Activated naive CD4-positive, alpha-beta T cell treated with anti-CD3 and anti-CD28 coated beads, Interleukin-2, amount 10 ng/mL, durations not matched to agents 7 days and 5 days (primary cell): ENCODE measurements at regions of chr11 and their contacts with region 1.

Region 1: DNA sequence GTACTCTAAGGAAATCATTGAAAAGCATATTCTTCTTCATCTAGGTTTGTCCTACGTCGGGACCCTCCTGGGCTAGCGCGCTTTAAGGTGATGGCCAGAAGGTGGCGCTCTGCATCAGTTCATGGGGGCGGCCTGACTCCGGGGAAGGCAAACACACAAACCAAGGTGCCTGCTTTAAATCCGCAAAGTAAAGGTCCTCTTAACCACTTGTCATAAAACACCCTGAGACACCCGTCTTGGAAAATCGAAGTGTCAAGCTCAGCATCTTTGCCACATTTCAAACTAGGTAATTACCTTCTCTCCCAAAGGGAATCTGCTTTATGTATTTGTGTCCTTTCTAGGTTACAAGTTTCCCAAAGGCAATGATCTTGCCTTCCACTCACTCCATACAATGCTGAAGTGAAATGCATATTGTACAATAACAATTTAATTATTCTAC is 33.9 kb downstream of the LMO2 start:
- DNase-seq: peak; percentile 79
- H3K4me3 Mint-ChIP-seq: no peak overlapping the region
- H3K27ac Mint-ChIP-seq: no peak overlapping the region
- H3K4me1 Mint-ChIP-seq: no peaks in the 10 kb centered on the region
- H3K27me3 Mint-ChIP-seq: peaks cover 62% of the 10 kb centered on the region

Region 2: DNA sequence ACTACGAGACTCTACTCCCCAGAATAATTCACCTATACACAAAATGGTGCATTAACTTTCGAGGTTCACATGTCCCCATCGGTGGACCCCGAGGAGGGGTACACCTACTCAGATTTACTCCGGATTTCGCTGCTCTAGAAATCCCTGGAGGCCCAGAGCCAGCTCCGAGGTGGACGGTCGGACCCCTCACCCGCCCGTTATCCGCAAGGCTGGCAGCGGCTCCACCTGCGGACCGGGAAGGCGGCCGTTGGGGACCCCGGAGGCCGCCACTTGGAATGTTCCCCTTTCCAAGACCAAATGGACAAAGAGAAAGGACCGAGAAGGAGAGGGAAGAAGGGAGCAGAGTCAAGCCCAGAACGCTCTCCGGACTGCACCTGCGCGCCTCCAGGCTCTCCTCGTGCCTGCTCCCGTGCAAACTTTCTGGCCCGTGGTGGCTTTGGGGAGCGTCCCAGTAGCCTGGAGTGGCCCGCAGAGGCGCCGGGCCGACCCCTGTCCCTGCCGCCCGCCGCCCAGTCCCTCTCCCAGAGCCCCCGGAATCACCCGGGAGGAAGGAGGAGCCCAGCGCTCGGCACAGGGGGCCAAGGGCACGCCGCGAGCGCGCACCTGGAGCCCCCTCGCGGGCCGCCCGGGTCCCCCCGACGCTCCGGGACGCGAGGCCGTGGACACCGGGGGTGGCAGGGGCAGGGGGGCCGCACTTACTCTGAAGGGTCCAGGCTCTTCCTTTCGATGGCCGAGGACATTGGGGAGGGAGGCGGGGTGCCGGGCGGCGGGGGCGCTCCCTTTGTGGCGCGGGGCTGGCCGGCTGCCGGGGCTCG is 10.9 kb after region 1 on chr11:
- CTCF ChIA-PET with region 1: interaction called, 14 read pairs
- DNase-seq: no peak
- H3K4me3 Mint-ChIP-seq: peak overlapping the region; percentile 1
- H3K27ac Mint-ChIP-seq: no peak overlapping the region
- H3K4me1 Mint-ChIP-seq: peaks cover 18% of the 10 kb centered on the region
- H3K27me3 Mint-ChIP-seq: peaks cover 89% of the 10 kb centered on the region

Region 3: GRCh38 chr11:33912405-33913361 is 54.7 kb after region 1 on chr11:
- CTCF ChIA-PET with region 1: no interaction called
- DNase-seq: no peak
- H3K4me3 Mint-ChIP-seq: no peak overlapping the region
- H3K27ac Mint-ChIP-seq: no peak overlapping the region
- H3K4me1 Mint-ChIP-seq: no peaks in the 10 kb centered on the region
- H3K27me3 Mint-ChIP-seq: peaks cover 27% of the 10 kb centered on the region

Region 4: GRCh38 chr11:33970984-33971466 is 113.1 kb after region 1 on chr11:
- CTCF ChIA-PET with region 1: interaction called, 15 read pairs
- DNase-seq: peak; percentile 30
- H3K4me3 Mint-ChIP-seq: no peak overlapping the region
- H3K27ac Mint-ChIP-seq: no peak overlapping the region
- H3K4me1 Mint-ChIP-seq: no peaks in the 10 kb centered on the region
- H3K27me3 Mint-ChIP-seq: peaks cover 5% of the 10 kb centered on the region

Region 5: DNA sequence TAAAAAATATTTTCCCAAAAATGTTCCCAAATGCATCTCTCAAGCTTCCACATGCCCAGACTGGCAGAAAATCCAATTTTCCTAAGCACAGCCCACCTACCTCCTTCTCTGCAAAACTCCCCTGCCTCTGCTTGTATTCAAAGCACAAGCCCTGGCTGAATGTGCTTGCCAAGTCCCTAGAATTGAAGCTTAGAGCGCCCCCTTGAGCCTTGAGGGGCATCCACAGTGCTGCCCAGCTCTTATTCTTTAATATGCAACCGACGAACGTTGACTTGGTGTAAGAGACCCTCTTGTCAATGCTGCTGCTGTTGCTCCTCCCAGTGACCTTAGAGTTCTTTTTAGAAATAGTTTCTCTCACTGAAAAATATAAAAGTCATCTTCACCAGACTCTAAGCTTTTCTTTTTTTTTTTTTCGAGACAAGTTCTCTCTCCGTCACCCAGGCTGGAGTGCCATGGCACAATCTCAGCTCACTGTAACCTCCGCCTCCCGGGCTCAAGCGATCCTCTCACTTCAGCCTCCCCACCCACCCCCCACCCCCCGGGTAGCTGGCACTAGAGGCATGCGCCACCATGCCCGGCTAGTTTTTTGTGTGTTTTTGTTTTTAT is 130.1 kb after region 1 on chr11:
- CTCF ChIA-PET with region 1: interaction called, 24 read pairs
- DNase-seq: peak; percentile 78
- H3K4me3 Mint-ChIP-seq: no peak overlapping the region
- H3K27ac Mint-ChIP-seq: no peak overlapping the region
- H3K4me1 Mint-ChIP-seq: peaks cover 8% of the 10 kb centered on the region
- H3K27me3 Mint-ChIP-seq: peaks cover 16% of the 10 kb centered on the region